Activated naive CD8-positive, alpha-beta T cell treated with anti-CD3 and anti-CD28 coated beads, Interleukin-2, amount 10 ng/mL, durations not matched to agents 7 days and 5 days (primary cell): ENCODE measurements at regions of chr14 and their contacts with region 1.

Region 1: GRCh38 chr14:24160850-24161804 is at the start of gene IRF9:
- DNase-seq: peak; percentile 98
- ATAC-seq: peak; percentile 87
- H3K4me3 Mint-ChIP-seq: peak within 1 kb of the TSS; percentile 97
- H3K27ac Mint-ChIP-seq: peak within 1 kb of the TSS; percentile 100
- H3K4me1 Mint-ChIP-seq: peaks cover 47% of the 10 kb centered on the region
- H3K27me3 Mint-ChIP-seq: no peaks in the 10 kb centered on the region
- total RNA-seq, gene IRF9: 234 to 252 TPM

Region 2: GRCh38 chr14:23984891-23985602 is 176.1 kb before region 1 on chr14:
- POLR2A ChIA-PET with region 1: no interaction called
- DNase-seq: no peak
- ATAC-seq: no peak
- H3K4me3 Mint-ChIP-seq: no peak overlapping the region
- H3K27ac Mint-ChIP-seq: no peak overlapping the region
- H3K4me1 Mint-ChIP-seq: peaks cover 26% of the 10 kb centered on the region
- H3K27me3 Mint-ChIP-seq: no peaks in the 10 kb centered on the region

Region 3: DNA sequence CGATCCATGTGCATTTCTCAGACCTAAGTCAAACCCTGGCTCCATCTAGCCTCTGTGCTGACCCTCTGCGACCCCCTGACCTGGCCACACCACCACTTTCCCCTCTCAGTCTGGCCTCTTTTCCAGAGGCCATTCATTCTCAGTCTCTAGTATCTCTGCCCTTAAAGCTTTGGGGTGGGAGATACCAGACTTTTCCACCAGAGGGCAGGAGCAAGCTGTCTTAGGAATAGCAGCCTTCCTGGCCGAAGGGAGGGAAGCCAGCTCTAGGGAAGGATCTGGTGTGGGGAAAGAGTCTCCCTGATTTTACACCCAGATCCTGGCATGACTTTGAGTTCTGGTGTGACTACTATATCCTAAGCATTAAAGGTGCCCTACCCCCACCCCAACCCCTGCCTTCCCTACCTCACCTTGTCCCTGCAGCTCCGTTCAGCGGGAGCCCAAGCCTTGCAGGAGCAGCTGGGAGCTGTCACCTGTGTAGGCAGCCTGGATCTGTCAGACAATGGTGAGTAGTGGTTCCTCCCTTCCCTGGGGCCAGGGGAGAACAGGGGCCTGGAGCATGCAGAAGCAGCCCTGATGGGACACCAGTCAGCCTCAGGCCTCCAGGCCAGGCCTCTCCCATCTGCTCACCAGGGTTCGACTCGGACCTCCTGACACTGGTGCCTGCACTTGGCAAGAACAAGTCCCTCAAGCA is 102.7 kb before region 1 on chr14:
- POLR2A ChIA-PET with region 1: interaction called, 28 read pairs
- DNase-seq: no peak
- ATAC-seq: peak; percentile 63
- H3K4me3 Mint-ChIP-seq: no peak overlapping the region
- H3K27ac Mint-ChIP-seq: peak overlapping the region; percentile 78
- H3K4me1 Mint-ChIP-seq: peaks cover 2% of the 10 kb centered on the region
- H3K27me3 Mint-ChIP-seq: peaks cover 2% of the 10 kb centered on the region

Region 4: GRCh38 chr14:24108336-24108874 is 52.7 kb before region 1 on chr14:
- POLR2A ChIA-PET with region 1: interaction called, 121 read pairs
- DNase-seq: no peak
- ATAC-seq: peak; percentile 35
- H3K4me3 Mint-ChIP-seq: peak overlapping the region; percentile 60
- H3K27ac Mint-ChIP-seq: peak overlapping the region; percentile 96
- H3K4me1 Mint-ChIP-seq: peaks cover 31% of the 10 kb centered on the region
- H3K27me3 Mint-ChIP-seq: no peaks in the 10 kb centered on the region

Region 5: GRCh38 chr14:24141097-24141880 is 19.8 kb before region 1 on chr14 and contains the start of gene EMC9:
- POLR2A ChIA-PET with region 1: interaction called, 347 read pairs
- DNase-seq: peak; percentile 96
- ATAC-seq: peak; percentile 91
- H3K4me3 Mint-ChIP-seq: peak within 1 kb of the TSS; percentile 100
- H3K27ac Mint-ChIP-seq: peak within 1 kb of the TSS; percentile 98
- H3K4me1 Mint-ChIP-seq: peaks cover 63% of the 10 kb centered on the region
- H3K27me3 Mint-ChIP-seq: no peaks in the 10 kb centered on the region
- total RNA-seq, gene EMC9: 41.6 to 43.9 TPM

Region 6: GRCh38 chr14:24179961-24180796 is 19.1 kb after region 1 on chr14:
- POLR2A ChIA-PET with region 1: interaction called, 37 read pairs
- DNase-seq: no peak
- ATAC-seq: no peak
- H3K4me3 Mint-ChIP-seq: no peak overlapping the region
- H3K27ac Mint-ChIP-seq: peak overlapping the region; percentile 25
- H3K4me1 Mint-ChIP-seq: peaks cover under 1% of the 10 kb centered on the region
- H3K27me3 Mint-ChIP-seq: no peaks in the 10 kb centered on the region

Region 7: GRCh38 chr14:24215495-24216344 is 54.6 kb after region 1 on chr14 and contains the start of gene MDP1:
- POLR2A ChIA-PET with region 1: interaction called, 57 read pairs
- DNase-seq: peak; percentile 85
- ATAC-seq: peak; percentile 73
- H3K4me3 Mint-ChIP-seq: peak within 1 kb of the TSS; percentile 93
- H3K27ac Mint-ChIP-seq: peak within 1 kb of the TSS; percentile 98
- H3K4me1 Mint-ChIP-seq: peaks cover 38% of the 10 kb centered on the region
- H3K27me3 Mint-ChIP-seq: no peaks in the 10 kb centered on the region
- total RNA-seq, gene MDP1: 11.9 to 15.4 TPM

Region 8: GRCh38 chr14:24259252-24259995 is 98.3 kb after region 1 on chr14:
- POLR2A ChIA-PET with region 1: no interaction called
- DNase-seq: no peak
- ATAC-seq: no peak
- H3K4me3 Mint-ChIP-seq: no peak overlapping the region
- H3K27ac Mint-ChIP-seq: no peak overlapping the region
- H3K4me1 Mint-ChIP-seq: no peaks in the 10 kb centered on the region
- H3K27me3 Mint-ChIP-seq: no peaks in the 10 kb centered on the region

Region 9: DNA sequence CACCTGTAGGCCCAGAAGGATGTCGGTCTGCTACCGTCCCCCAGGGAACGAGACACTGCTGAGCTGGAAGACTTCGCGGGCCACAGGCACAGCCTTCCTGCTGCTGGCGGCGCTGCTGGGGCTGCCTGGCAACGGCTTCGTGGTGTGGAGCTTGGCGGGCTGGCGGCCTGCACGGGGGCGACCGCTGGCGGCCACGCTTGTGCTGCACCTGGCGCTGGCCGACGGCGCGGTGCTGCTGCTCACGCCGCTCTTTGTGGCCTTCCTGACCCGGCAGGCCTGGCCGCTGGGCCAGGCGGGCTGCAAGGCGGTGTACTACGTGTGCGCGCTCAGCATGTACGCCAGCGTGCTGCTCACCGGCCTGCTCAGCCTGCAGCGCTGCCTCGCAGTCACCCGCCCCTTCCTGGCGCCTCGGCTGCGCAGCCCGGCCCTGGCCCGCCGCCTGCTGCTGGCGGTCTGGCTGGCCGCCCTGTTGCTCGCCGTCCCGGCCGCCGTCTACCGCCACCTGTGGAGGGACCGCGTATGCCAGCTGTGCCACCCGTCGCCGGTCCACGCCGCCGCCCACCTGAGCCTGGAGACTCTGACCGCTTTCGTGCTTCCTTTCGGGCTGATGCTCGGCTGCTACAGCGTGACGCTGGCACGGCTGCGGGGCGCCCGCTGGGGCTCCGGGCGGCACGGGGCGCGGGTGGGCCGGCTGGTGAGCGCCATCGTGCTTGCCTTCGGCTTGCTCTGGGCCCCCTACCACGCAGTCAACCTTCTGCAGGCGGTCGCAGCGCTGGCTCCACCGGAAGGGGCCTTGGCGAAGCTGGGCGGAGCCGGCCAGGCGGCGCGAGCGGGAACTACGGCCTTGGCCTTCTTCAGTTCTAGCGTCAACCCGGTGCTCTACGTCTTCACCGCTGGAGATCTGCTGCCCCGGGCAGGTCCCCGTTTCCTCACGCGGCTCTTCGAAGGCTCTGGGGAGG is 149.8 kb after region 1 on chr14 and contains the start of gene LTB4R:
- POLR2A ChIA-PET with region 1: interaction called, 11 read pairs
- DNase-seq: peak; percentile 83
- ATAC-seq: peak; percentile 88
- H3K4me3 Mint-ChIP-seq: peak within 1 kb of the TSS; percentile 84
- H3K27ac Mint-ChIP-seq: peak within 1 kb of the TSS; percentile 84
- H3K4me1 Mint-ChIP-seq: peaks cover 66% of the 10 kb centered on the region
- H3K27me3 Mint-ChIP-seq: no peaks in the 10 kb centered on the region
- total RNA-seq, gene LTB4R: 27.0 to 27.8 TPM